ENCODE measurements at regions of chr19 and their contacts with region 1.

Region 1: DNA sequence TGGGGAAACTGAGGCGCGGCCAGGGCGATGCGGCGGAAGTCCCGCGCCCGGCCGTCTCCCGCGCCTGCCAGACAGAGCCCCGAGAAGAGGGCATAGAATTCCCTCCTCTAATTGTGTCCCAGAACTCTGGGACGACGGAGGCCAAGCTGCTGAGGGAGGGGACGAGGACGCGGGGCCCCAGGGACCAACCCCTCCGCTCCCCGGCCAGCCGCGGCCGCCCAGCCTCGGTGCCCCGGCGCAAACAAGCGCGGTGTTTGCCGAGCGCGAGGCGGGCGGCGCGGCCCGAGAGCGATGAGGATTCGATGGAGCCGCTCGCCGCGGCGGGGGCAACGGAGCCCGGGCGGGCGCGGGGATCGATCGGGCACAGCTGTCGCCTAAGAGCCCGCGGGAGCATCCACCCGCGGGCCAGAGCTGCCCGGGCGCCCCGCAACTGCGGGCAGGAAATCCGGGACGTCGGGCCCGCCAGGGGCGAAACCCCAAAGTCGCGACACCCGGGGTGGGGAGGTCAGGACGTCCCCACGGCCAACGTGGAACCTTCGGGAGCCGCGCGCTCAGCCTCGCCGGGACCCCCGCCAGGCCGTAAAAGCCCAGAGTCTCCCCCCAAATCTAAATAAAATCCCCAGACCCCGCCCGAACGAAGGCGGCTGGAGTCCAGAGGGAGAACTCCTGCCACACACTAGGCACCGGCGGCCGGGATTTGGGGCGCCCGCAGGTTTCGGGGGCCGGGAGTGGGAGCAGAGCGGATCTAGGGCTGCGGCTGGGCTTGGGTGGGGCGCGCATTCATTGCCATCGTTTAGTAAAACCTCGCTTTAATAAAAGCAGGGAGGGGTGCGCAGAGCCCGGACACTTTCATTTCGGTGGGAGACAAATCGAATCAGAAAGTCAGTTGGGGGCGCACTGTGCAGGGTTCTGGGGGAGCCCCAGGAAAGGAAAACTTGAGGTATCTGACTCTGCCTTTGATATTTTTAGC is 3.6 kb upstream of the ONECUT3 start:
- DNase-seq: no peak

Region 2: GRCh38 chr19:1700733-1701663 is 48.7 kb before region 1 on chr19:
- intact Hi-C with region 1: loop called in 1 of 2 experiments (anchors 1 kb)
- DNase-seq: no peak

Region 3: GRCh38 chr19:1725100-1726064 is 24.3 kb before region 1 on chr19:
- intact Hi-C with region 1: no loop called
- DNase-seq: no peak

Region 4: DNA sequence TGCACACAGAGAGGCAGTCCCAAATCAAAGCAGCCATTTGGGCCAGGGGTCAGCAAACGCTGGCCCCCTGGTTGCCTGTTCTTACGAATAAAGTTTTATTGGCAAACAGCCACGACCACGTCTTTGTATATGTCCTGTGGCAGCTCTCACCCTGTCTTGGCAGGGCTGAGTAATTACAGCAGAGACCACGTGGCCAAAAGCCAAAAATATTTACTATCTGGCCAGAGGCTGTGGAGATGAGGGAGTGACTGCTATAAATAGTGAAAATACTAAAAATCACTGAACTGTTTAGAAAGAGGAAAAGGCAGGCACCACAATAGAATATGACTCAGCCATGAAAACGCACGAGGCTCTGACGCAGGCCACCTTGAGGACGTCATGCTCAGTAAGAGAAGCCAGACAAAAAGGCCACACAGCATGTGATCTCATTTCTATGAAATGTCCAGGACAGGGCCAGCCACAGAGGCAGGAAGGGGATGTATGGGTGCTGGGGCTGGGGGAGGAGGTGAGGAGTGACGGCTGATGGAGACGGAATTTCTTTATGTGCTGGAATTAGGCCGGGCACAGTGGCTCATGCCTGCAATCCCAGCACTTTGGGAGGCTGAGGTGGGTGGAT is 1701.2 kb after region 1 on chr19:
- intact Hi-C with region 1: loop called in 1 of 2 experiments (anchors 5 kb)
- DNase-seq: peak; percentile 96

Measured in posterior vena cava (tissue), 2 donors.